CD8-positive, alpha-beta T cell (primary cell): ENCODE measurements at regions of chr1 and their contacts with region 1.

Region 1: GRCh38 chr1:35539073-35539823 is 18.0 kb downstream of the KIAA0319L start:
- DNase-seq: peak in 6 of 9 experiments; percentile 39 to 75 (median 62)
- ATAC-seq: peak; percentile 87
- H3K4me3 ChIP-seq: peak overlapping the region in 1 of 2 experiments; percentile 42
- H3K4me3 Mint-ChIP-seq: peak overlapping the region; percentile 73
- H3K27ac ChIP-seq: peak overlapping the region; percentile 63 to 73
- H3K27ac Mint-ChIP-seq: peak overlapping the region; percentile 94
- H3K4me1 ChIP-seq: peaks cover 76% of the 10 kb centered on the region
- H3K4me1 Mint-ChIP-seq: peaks cover 87% of the 10 kb centered on the region
- H3K27me3 ChIP-seq: no peaks in the 10 kb centered on the region
- H3K27me3 Mint-ChIP-seq: no peaks in the 10 kb centered on the region
- CTCF ChIP-seq: no peak

Region 2: GRCh38 chr1:35505908-35506798 is 33.1 kb before region 1 on chr1:
- CTCF ChIA-PET with region 1: interaction called, 4 read pairs
- POLR2A ChIA-PET with region 1: interaction called, 14 read pairs
- intact Hi-C with region 1: loop called (anchors 2 kb)
- DNase-seq: peak in 7 of 9 experiments; percentile 21 to 77 (median 61)
- ATAC-seq: peak; percentile 71
- H3K4me3 ChIP-seq: no peak overlapping the region
- H3K4me3 Mint-ChIP-seq: peak overlapping the region; percentile 69
- H3K27ac ChIP-seq: peak overlapping the region; percentile 17 to 58
- H3K27ac Mint-ChIP-seq: peak overlapping the region; percentile 95
- H3K4me1 ChIP-seq: peaks cover 33% of the 10 kb centered on the region
- H3K4me1 Mint-ChIP-seq: peaks cover 71% of the 10 kb centered on the region
- H3K27me3 ChIP-seq: no peaks in the 10 kb centered on the region
- H3K27me3 Mint-ChIP-seq: no peaks in the 10 kb centered on the region
- CTCF ChIP-seq: no peak